ENCODE measurements at regions of chr13 and their contacts with region 1.

Region 1: GRCh38 chr13:20495082-20496023 is 30.3 kb downstream of the CRYL1 start:
- DNase-seq: peak; percentile 75
- H3K4me3 ChIP-seq: no peak overlapping the region
- H3K27ac ChIP-seq: no peak overlapping the region
- H3K4me1 ChIP-seq: peaks cover 8% of the 10 kb centered on the region
- H3K27me3 ChIP-seq: no peaks in the 10 kb centered on the region
- CTCF ChIP-seq: peak; percentile 96

Region 2: DNA sequence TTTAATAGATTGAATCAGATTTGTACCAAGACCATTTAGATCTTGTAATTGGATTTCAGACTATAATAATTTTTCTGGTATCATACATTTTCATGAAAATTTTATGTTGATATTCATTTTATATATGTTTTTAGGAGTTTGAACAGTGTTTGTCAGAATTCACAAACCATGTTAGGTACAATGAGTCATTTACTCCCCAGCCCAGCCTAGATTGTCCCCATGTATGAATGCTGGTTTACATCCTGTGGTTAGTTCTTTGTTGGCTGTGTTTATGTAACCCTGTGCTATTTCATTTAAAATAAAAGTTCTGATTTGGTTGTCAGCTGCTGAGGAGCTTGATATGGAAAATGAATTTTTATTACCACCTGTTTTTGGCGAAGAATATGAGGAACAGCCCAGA is 431.2 kb before region 1 on chr13:
- CTCF ChIA-PET with region 1: no interaction called
- POLR2A ChIA-PET with region 1: no interaction called
- intact Hi-C with region 1: no loop called
- DNase-seq: no peak
- H3K4me3 ChIP-seq: no peak overlapping the region
- H3K27ac ChIP-seq: no peak overlapping the region
- H3K4me1 ChIP-seq: no peaks in the 10 kb centered on the region
- H3K27me3 ChIP-seq: no peaks in the 10 kb centered on the region
- CTCF ChIP-seq: no peak

Region 3: GRCh38 chr13:20160847-20161274 is 334.5 kb before region 1 on chr13 and contains the start of gene GJA3:
- CTCF ChIA-PET with region 1: no interaction called
- POLR2A ChIA-PET with region 1: no interaction called
- intact Hi-C with region 1: no loop called
- DNase-seq: peak; percentile 56
- H3K4me3 ChIP-seq: peak within 1 kb of the TSS; percentile 54
- H3K27ac ChIP-seq: no peak within 1 kb of the TSS
- H3K4me1 ChIP-seq: peaks cover 29% of the 10 kb centered on the region
- H3K27me3 ChIP-seq: peaks cover 37% of the 10 kb centered on the region
- CTCF ChIP-seq: no peak
- total RNA-seq, gene GJA3: 0.43 and 0.48 TPM in 2 replicates

Region 4: GRCh38 chr13:20703780-20704445 is 208.6 kb after region 1 on chr13:
- CTCF ChIA-PET with region 1: no interaction called
- POLR2A ChIA-PET with region 1: no interaction called
- intact Hi-C with region 1: loop called (anchors 5 kb)
- DNase-seq: peak; percentile 83
- H3K4me3 ChIP-seq: peak overlapping the region; percentile 75
- H3K27ac ChIP-seq: no peak overlapping the region
- H3K4me1 ChIP-seq: peaks cover 8% of the 10 kb centered on the region
- H3K27me3 ChIP-seq: no peaks in the 10 kb centered on the region
- CTCF ChIP-seq: peak; percentile 37; the same call in 1 of the 2 replicates

Region 5: GRCh38 chr13:20869542-20869941 is 374.2 kb after region 1 on chr13:
- CTCF ChIA-PET with region 1: interaction called, 3 read pairs
- POLR2A ChIA-PET with region 1: no interaction called
- intact Hi-C with region 1: loop called (anchors 1 kb)
- DNase-seq: peak; percentile 31
- H3K4me3 ChIP-seq: no peak overlapping the region
- H3K27ac ChIP-seq: no peak overlapping the region
- H3K4me1 ChIP-seq: peaks cover 32% of the 10 kb centered on the region
- H3K27me3 ChIP-seq: no peaks in the 10 kb centered on the region
- CTCF ChIP-seq: peak; percentile 53

Region 6: DNA sequence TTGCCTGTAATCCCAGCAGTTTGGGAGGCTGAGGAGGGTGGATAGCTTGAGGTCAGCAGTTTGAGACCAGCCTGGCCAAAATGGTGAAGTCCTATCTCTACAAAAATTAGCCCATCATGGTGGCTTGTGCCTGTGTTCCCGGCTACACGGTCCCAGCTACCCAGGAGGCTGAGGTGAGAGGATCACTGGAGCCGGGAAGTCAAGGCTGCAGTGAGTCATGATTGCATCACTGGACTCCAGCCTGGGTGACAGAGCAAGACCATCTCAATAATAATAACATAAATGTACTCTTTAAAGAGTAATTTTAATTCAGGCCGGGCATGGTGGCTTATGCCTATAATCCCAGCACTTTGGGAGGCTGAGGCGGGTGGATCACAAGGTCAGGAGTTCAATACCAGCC is 642.3 kb after region 1 on chr13:
- CTCF ChIA-PET with region 1: no interaction called
- POLR2A ChIA-PET with region 1: no interaction called
- intact Hi-C with region 1: loop called (anchors 10 kb)
- DNase-seq: no peak
- H3K4me3 ChIP-seq: no peak overlapping the region
- H3K27ac ChIP-seq: no peak overlapping the region
- H3K4me1 ChIP-seq: peaks cover 4% of the 10 kb centered on the region
- H3K27me3 ChIP-seq: no peaks in the 10 kb centered on the region
- CTCF ChIP-seq: no peak

Region 7: DNA sequence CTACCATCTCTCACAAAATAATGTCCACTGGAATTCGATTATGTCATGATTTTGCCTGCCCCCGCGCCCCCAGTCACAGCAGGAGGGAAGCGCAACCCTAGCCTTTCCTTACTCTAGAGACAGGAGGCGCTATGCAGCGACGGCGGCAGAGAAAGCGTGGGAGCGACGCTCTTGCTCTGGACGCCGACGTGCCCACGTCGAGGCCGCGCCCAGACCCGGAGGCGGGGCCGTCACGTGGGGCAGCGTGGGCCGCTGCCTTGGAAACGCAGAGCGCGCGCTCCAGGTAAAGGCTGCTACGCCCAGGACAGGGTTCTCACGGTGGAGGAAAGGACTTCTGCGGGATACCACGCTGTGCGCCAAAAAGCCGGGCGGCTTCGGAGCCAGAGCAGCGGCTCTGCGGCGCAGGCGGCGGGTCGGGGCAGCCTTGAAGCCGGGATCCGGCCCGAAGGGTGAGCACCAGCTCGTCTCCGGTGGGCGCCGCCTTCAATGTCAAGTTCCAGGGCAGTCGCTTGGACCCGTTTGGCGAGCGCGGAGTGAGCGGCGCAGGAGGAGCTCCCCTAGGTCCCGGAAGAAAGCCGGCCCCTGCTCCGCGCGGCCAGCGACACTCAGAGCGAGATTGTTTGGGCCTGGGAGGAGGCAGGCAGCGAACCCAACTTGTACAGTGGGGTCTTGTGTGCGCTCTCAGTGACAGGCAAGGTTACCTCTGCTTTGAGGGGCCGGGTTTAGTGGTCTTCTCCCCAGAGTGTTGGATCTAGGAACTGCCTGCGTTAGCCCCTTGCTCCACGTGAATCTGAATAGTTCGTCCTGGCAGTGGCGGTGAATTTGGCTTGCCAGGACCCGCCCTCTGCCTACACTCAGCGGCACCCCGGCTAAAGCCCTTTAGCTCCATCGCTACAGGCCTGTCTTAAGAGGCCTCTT is 802.8 kb after region 1 on chr13:
- CTCF ChIA-PET with region 1: no interaction called
- POLR2A ChIA-PET with region 1: no interaction called
- intact Hi-C with region 1: loop called (anchors 10 kb)
- DNase-seq: peak; percentile 95
- H3K4me3 ChIP-seq: peak overlapping the region; percentile 86
- H3K27ac ChIP-seq: peak overlapping the region; percentile 70
- H3K4me1 ChIP-seq: peaks cover 25% of the 10 kb centered on the region
- H3K27me3 ChIP-seq: no peaks in the 10 kb centered on the region
- CTCF ChIP-seq: peak; percentile 92

Measured in A673 (cell line).